HEK293 (cell line): ENCODE measurements at regions of chr11 and their contacts with region 1.

Region 1: GRCh38 chr11:8870411-8871170 is 40.4 kb upstream of the AKIP1 start:
- H3K4me3 ChIP-seq: peak overlapping the region; percentile 80
- H3K27ac ChIP-seq: peak overlapping the region; percentile 77
- H3K4me1 ChIP-seq: 0 out of 2 replicates have a peak, but pooled peaks cover 2% of the 10 kb centered on the region
- CTCF ChIP-seq: no peak

Region 2: GRCh38 chr11:8682303-8683114 is 188.1 kb before region 1 on chr11 and contains the starts of genes RPL27A and TRIM66:
- CTCF ChIA-PET with region 1: no interaction called
- POLR2A ChIA-PET with region 1: interaction called, 10 read pairs
- H3K4me3 ChIP-seq: peak within 1 kb of the TSS; percentile 94
- H3K27ac ChIP-seq: peak within 1 kb of the TSS; percentile 84
- H3K4me1 ChIP-seq: no peaks in the 10 kb centered on the region
- CTCF ChIP-seq: no peak

Region 3: GRCh38 chr11:8688414-8689362 is 181.9 kb before region 1 on chr11:
- CTCF ChIA-PET with region 1: no interaction called
- POLR2A ChIA-PET with region 1: interaction called, 10 read pairs
- H3K4me3 ChIP-seq: peak overlapping the region; percentile 77
- H3K27ac ChIP-seq: peak overlapping the region; percentile 55
- H3K4me1 ChIP-seq: no peaks in the 10 kb centered on the region
- CTCF ChIP-seq: peak; percentile 59

Region 4: DNA sequence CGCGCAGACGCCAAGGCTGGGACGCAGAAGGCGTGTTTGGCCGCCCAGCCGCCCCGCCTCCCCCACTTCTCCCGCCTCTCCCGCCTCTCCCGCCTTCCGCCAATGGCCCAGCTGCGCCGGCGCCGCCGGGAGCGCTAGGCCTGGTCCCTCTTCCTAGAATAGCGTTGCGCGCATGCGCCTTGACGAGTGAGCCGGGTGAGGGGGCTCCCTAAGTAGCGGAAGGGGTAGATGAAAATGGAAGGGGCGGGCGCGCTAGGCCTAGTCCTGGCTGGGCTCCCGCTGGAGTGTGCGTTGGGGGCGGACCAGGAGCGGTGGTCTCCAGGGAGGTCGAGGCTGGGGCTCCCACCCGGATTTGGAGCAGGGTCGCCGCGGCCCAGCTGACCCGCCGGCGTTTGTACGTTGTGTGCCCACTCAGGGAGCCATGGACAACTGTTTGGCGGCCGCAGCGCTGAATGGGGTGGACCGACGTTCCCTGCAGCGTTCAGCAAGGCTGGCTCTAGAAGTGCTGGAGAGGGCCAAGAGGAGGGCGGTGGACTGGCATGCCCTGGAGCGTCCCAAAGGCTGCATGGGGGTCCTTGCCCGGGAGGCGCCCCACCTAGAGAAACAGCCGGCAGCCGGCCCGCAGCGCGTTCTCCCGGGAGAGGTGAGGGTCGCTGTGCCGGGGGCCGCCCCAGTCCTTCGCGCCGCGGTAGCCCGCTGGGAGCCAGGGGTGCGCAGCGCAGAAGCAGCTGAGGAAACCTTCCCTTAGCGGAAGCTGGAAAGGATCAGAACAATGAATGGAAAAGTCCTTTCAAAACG is 40.6 kb after region 1 on chr11 and contains the start of gene AKIP1:
- CTCF ChIA-PET with region 1: interaction called, 3 read pairs
- POLR2A ChIA-PET with region 1: interaction called, 20 read pairs
- H3K4me3 ChIP-seq: peak within 1 kb of the TSS; percentile 85
- H3K27ac ChIP-seq: peak within 1 kb of the TSS; percentile 86
- H3K4me1 ChIP-seq: no peaks in the 10 kb centered on the region
- CTCF ChIP-seq: peak; percentile 7; the same call in 1 of the 2 replicates

Region 5: DNA sequence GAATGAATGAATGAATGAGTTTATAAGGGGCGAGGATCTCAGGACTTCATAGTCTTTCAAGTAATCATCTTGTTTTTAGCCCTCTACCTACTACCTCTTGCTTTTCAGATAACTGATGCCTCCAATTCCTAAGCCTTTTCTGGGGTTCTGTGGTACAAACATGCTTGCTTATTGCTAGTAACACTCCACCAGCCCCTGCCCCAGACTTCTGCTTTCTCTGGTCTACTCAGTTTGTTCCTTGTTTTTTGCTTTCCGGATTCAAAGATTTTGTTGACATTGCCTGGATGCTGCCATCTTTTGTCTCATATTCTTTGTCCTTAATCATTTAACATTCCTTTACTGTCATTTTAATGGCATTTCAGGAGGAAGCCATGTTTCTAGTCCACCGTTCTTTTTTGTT is 102.5 kb after region 1 on chr11:
- CTCF ChIA-PET with region 1: no interaction called
- POLR2A ChIA-PET with region 1: no interaction called
- H3K4me3 ChIP-seq: no peak overlapping the region
- H3K27ac ChIP-seq: no peak overlapping the region
- H3K4me1 ChIP-seq: no peaks in the 10 kb centered on the region
- CTCF ChIP-seq: no peak